ENCODE measurements at regions of chr20 and their contacts with region 1.

Region 1: GRCh38 chr20:1118336-1119127 is at the start of gene PSMF1:
- DNase-seq: peak; percentile 97
- ATAC-seq: peak; percentile 94
- H3K4me3 ChIP-seq: peak within 1 kb of the TSS; percentile 78 to 97 (median 85)
- H3K4me3 Mint-ChIP-seq: peak within 1 kb of the TSS; percentile 91
- H3K27ac ChIP-seq: peak within 1 kb of the TSS; percentile 70 to 91
- H3K27ac Mint-ChIP-seq: peak within 1 kb of the TSS; percentile 93
- H3K4me1 ChIP-seq: peaks cover 42 to 53% of the 10 kb centered on the region in 2 donors
- H3K4me1 Mint-ChIP-seq: peaks cover 62% of the 10 kb centered on the region
- H3K27me3 ChIP-seq: no peaks in the 10 kb centered on the region
- H3K27me3 Mint-ChIP-seq: no peaks in the 10 kb centered on the region
- CTCF ChIP-seq: no peak
- total RNA-seq, gene PSMF1: 113 and 114 TPM in 2 replicates

Region 2: DNA sequence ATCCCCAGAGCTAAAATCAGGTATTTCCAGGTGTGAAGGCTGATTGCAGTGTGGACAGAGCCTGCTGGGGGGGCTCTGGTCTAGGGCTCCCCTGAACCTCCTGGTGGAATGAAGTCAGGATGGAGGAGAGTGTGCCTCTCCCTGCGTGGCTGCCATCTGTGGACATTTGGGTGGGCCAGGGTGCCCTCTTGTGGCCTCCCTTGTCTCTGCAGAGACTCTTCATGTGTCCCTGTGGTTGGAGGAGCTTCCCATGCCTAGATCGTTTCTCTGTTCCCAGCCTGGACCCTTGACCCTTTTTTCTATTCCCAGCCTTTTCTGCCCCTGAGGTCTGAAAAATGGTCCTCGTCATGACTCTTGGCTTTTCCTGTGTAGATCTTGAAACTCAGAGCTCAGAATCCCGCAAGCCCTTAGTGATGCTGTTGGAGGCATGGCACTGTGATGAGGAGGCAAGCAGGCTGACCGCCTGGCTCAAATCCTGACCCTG is 10.1 kb before region 1 on chr20:
- CTCF ChIA-PET with region 1: interaction called, 18 read pairs
- POLR2A ChIA-PET with region 1: no interaction called
- intact Hi-C with region 1: no loop called
- DNase-seq: peak; percentile 58
- ATAC-seq: peak; percentile 76
- H3K4me3 ChIP-seq: no peak overlapping the region
- H3K4me3 Mint-ChIP-seq: no peak overlapping the region
- H3K27ac ChIP-seq: no peak overlapping the region
- H3K27ac Mint-ChIP-seq: no peak overlapping the region
- H3K4me1 ChIP-seq: peaks cover 0 to 4% of the 10 kb centered on the region in 2 donors
- H3K4me1 Mint-ChIP-seq: peaks cover 2% of the 10 kb centered on the region
- H3K27me3 ChIP-seq: peaks cover 0 to 6% (median 0%) of the 10 kb centered on the region in 4 experiments
- H3K27me3 Mint-ChIP-seq: no peaks in the 10 kb centered on the region
- CTCF ChIP-seq: peak; percentile 81

Region 3: DNA sequence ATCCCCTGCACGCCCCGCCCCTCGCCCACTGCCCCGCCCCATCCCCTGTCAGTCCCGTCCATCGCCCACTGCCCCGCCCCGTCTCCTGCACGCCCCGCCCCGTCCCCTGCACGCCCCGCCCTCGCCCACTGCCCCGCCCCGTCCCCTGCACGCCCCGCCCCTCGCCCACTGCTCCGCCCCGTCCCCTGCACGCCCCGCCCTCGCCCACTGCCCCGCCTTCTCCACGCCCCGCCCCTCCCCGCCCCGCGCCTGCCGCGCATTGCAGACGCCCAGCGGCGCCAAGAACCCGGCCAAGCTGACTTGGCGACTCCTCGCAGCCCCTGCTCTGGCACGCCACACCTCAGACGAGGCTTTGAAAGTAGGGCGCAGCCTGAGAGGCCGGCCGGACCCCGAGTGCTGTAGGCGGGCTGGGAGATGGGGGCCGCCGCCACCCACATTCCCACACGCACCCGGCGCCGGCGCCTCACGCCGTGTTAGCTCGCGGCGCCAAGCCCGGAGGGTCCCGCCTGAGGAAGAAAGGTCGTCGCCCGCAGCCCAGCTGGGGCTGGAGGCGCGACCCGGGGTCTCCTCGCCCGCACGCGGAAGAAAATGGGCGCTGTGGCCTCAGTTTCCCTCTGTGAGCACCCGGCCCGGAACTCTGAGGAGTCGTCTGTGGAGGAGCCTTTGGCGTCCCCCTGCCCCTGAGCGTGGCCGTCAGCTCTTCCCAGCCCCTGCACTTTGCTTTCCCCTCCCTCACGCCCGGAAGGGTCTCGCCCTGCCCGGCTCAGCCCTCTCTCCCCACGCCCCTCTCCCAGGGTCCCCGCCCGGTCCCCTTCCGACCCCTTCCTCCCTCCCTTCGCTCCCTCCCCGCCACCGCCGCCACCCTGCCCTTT is 107.5 kb after region 1 on chr20 and contains the start of gene RAD21L1:
- CTCF ChIA-PET with region 1: no interaction called
- POLR2A ChIA-PET with region 1: no interaction called
- intact Hi-C with region 1: loop called (anchors 10 kb)
- DNase-seq: peak; percentile 77
- ATAC-seq: peak; percentile 84
- H3K4me3 ChIP-seq: peak within 1 kb of the TSS in 4 of 5 experiments; percentile 46 to 61 (median 56)
- H3K4me3 Mint-ChIP-seq: peak within 1 kb of the TSS; percentile 83
- H3K27ac ChIP-seq: no peak within 1 kb of the TSS
- H3K27ac Mint-ChIP-seq: no peak within 1 kb of the TSS
- H3K4me1 ChIP-seq: peaks cover 16 to 17% of the 10 kb centered on the region in 2 donors
- H3K4me1 Mint-ChIP-seq: peaks cover 16% of the 10 kb centered on the region
- H3K27me3 ChIP-seq: peaks cover 1 to 34% (median 25%) of the 10 kb centered on the region in 4 experiments
- H3K27me3 Mint-ChIP-seq: peaks cover 31% of the 10 kb centered on the region
- CTCF ChIP-seq: no peak
- total RNA-seq, gene RAD21L1: not detected in 2 replicates

Region 4: GRCh38 chr20:1266167-1266973 is 147.8 kb after region 1 on chr20 and contains the start of gene SNPH:
- CTCF ChIA-PET with region 1: no interaction called
- POLR2A ChIA-PET with region 1: no interaction called
- intact Hi-C with region 1: loop called (anchors 5 kb)
- DNase-seq: peak; percentile 76
- ATAC-seq: peak; percentile 89
- H3K4me3 ChIP-seq: peak within 1 kb of the TSS; percentile 3 to 70 (median 54)
- H3K4me3 Mint-ChIP-seq: peak within 1 kb of the TSS; percentile 91
- H3K27ac ChIP-seq: no peak within 1 kb of the TSS
- H3K27ac Mint-ChIP-seq: peak within 1 kb of the TSS; percentile 79
- H3K4me1 ChIP-seq: peaks cover 9 to 15% of the 10 kb centered on the region in 2 donors
- H3K4me1 Mint-ChIP-seq: peaks cover 13% of the 10 kb centered on the region
- H3K27me3 ChIP-seq: peaks cover 0 to 17% (median 9%) of the 10 kb centered on the region in 4 experiments
- H3K27me3 Mint-ChIP-seq: peaks cover 8% of the 10 kb centered on the region
- CTCF ChIP-seq: no peak
- total RNA-seq, gene SNPH: 2.1 and 3.0 TPM in 2 replicates